ENCODE measurements at regions of chr1 and their contacts with region 1.

Region 1: DNA sequence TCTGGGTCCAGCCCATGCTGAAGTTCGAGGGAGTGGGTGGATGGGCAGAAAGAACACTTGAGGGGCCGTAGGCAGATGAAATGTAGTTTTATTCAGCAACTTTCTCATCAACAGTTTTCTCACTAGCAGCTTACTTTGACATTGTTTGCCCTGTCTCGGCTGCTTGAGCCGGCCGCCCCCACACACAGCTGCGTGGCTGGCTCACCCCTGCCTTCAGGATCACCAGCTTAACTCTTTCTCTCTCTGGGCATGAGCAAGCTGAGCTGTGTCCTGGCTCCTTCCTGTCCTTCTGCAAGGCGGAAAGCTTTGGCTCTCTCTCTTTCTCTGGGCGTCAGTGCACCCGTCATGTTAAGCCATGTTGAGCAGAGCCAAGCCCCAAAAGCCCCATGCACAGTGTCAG is 104.4 kb upstream of the GNG12 start:
- DNase-seq: no peak
- H3K4me3 ChIP-seq: no peak overlapping the region
- H3K27ac ChIP-seq: no peak overlapping the region
- H3K4me1 ChIP-seq: no peaks in the 10 kb centered on the region
- H3K27me3 ChIP-seq: no peaks in the 10 kb centered on the region
- CTCF ChIP-seq: no peak
- POLR2A ChIP-seq: no peak

Region 2: GRCh38 chr1:67897270-67897949 is 40.2 kb before region 1 on chr1:
- intact Hi-C with region 1: loop called (anchors 2 kb)
- DNase-seq: no peak
- H3K4me3 ChIP-seq: no peak overlapping the region
- H3K27ac ChIP-seq: no peak overlapping the region
- H3K4me1 ChIP-seq: no peaks in the 10 kb centered on the region
- H3K27me3 ChIP-seq: no peaks in the 10 kb centered on the region
- CTCF ChIP-seq: no peak
- POLR2A ChIP-seq: no peak

Region 3: DNA sequence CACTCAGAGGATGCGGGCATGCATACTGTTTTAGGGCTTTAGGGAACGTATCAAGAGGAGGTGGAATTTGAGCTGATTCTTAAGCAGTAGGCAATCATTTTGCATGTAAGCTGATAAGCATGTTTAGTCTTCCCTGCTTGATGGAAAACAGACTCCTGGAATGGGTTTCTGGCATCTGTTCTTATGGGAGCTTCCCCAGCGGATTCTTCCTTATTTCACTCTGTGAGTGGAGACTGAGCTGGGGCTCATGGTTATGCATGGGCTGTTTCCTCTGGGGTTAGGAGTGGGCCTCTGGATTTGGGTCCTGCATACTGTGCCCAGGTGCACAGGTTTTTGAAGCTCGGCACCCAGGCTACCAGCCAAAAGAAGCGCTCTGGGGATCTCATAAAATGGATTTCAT is 19.4 kb after region 1 on chr1:
- intact Hi-C with region 1: loop called (anchors 1 kb)
- DNase-seq: no peak
- H3K4me3 ChIP-seq: no peak overlapping the region
- H3K27ac ChIP-seq: no peak overlapping the region
- H3K4me1 ChIP-seq: no peaks in the 10 kb centered on the region
- H3K27me3 ChIP-seq: no peaks in the 10 kb centered on the region
- CTCF ChIP-seq: no peak
- POLR2A ChIP-seq: no peak

Region 4: DNA sequence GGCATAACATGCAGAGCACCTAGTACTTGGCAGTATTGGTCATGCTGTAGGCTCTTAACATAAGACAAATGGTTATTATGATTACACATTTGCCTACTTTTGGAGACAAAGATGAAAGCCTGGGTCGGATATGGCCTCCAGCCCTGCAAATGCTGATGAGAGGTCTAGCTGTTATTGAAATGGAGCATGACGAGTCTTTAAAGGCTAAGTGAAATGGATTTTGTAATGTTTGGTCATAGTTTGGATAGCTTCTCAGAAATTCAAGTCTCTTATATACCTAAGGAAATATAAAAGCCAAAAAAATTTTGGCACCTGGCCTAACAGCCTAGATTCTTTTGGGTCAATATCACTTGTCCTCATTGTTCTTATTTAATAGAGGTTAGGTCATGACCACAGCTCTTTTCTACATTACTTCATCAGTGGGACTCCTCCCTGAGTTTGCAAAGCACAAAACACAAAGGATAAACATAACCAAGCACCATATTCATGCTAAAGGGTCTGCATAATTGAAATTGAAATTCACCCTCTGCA is 363.9 kb after region 1 on chr1:
- intact Hi-C with region 1: loop called (anchors 10 kb)
- DNase-seq: no peak
- H3K4me3 ChIP-seq: no peak overlapping the region
- H3K27ac ChIP-seq: no peak overlapping the region
- H3K4me1 ChIP-seq: no peaks in the 10 kb centered on the region
- H3K27me3 ChIP-seq: no peaks in the 10 kb centered on the region
- CTCF ChIP-seq: no peak
- POLR2A ChIP-seq: no peak

Measured in breast epithelium (tissue), 4 donors.